SK-N-SH (cell line): ENCODE measurements at regions of chr1 and their contacts with region 1.

Region 1: DNA sequence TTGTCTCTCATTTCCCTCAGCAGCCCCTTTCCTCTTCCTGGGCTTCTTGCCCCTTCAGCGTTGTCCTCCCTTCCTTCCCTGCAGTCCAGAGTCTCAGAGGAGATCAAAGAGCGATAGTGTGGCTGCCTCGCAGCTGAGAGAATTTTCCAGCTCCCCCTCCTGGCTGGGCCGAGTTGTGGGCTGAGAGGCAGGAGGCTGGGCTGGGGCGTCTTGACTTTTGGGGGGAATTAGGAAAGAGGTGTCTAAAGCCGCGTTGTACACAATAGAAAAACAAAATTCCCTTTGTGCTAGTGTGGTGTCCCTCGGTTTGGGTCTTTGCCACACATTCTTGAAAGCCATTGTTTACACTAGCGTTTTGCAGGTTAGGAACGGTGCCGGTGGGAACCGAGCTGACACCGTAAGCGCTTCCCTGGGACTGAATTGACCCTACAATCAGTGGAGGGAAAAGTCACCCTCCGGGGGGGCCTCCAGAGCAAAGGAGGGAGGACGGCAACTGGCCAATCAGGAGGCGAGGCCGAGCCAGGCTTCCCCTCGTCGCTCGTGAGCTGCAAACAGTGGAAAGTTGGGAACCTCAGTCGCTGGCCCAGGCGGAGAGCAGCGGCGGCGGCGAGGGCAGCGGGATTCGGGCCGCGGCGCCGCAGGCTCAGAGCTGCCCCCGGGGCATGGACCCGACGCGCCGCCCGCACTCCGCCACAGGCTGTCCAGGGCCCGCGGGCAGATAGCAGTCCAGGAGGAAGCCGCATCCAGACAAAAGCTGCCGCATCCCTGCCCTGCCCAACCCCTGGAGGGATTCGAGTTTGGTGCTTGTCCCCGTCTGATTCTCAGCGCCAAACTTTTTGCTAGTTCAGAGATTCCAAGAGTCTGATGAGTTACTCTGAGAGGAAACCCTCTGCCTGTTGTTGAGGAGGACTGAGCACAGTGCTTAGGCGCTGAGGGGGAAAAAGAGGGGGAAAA is at the start of gene HMCN1:
- DNase-seq: peak; percentile 59
- H3K4me3 ChIP-seq: peak within 1 kb of the TSS; percentile 66 to 68
- H3K27ac ChIP-seq: peak within 1 kb of the TSS; percentile 67 to 78
- H3K4me1 ChIP-seq: peaks cover 7 to 14% of the 10 kb centered on the region in 2 experiments; a peak in 3 of 4 replicates
- H3K27me3 ChIP-seq: peaks cover 4% of the 10 kb centered on the region; the same call in 1 of the 2 replicates
- CTCF ChIP-seq: peak; percentile 57
- EP300 ChIP-seq: no peak
- RAD21 ChIP-seq: no peak
- polyA plus RNA-seq, gene HMCN1: 59.5 and 92.6 TPM in 2 replicates

Region 2: DNA sequence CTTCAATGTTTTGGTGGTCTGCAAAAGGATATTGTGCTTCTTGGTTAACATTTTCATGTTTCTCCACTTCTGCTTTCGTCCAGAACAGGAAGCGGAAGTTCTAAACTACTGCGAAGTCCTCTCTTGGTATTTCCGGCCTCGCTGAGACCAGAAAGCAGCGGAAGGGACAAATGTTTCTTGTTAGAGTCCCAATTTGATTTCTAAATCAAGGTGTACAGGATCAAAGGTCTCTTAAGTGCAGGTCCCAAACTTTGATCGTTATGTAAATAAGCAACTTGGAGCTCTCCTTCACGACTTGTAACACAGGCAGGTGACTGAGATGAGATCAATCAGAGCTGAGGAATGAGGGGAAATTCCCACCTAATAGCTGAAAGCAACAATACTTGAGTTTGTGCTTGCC is 40.0 kb before region 1 on chr1:
- CTCF ChIA-PET with region 1: no interaction called
- POLR2A ChIA-PET with region 1: no interaction called
- DNase-seq: no peak
- H3K4me3 ChIP-seq: no peak overlapping the region
- H3K27ac ChIP-seq: peak overlapping the region in 1 of 2 experiments; percentile 7; a peak in 1 of 4 replicates
- H3K4me1 ChIP-seq: peaks cover 0 to 26% of the 10 kb centered on the region in 2 experiments; a peak in 2 of 4 replicates
- H3K27me3 ChIP-seq: no peaks in the 10 kb centered on the region
- CTCF ChIP-seq: no peak
- EP300 ChIP-seq: no peak
- RAD21 ChIP-seq: no peak

Region 3: GRCh38 chr1:185720633-185721272 is 13.3 kb before region 1 on chr1:
- CTCF ChIA-PET with region 1: interaction called, 18 read pairs
- POLR2A ChIA-PET with region 1: no interaction called
- DNase-seq: no peak
- H3K4me3 ChIP-seq: no peak overlapping the region
- H3K27ac ChIP-seq: peak overlapping the region; percentile 65 to 78; a peak in 3 of 4 replicates
- H3K4me1 ChIP-seq: peaks cover 2 to 40% of the 10 kb centered on the region in 2 experiments; a peak in 3 of 4 replicates
- H3K27me3 ChIP-seq: no peaks in the 10 kb centered on the region
- CTCF ChIP-seq: peak; percentile 73
- EP300 ChIP-seq: no peak
- RAD21 ChIP-seq: peak; percentile 53; the same call in 1 of the 2 replicates

Region 4: DNA sequence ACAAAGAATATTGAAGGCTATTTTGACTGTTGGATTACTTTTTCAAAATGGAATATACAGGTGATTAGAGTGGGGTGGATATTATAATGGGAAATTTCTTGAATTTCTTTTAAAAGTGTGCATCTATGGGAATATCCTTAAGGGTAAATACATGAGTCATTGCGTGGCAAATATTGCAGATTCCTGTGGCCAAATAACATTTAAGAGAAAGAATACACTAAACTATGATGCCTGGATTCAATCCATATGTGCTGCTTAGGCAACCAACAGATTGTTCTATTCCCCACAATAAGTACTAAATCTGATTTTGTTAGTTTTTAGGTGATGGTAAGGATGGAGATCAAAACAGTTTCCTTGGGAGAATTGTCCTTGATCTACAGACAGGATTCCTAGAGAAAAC is 119.6 kb after region 1 on chr1:
- CTCF ChIA-PET with region 1: no interaction called
- POLR2A ChIA-PET with region 1: no interaction called
- DNase-seq: no peak
- H3K4me3 ChIP-seq: no peak overlapping the region
- H3K27ac ChIP-seq: peak overlapping the region; percentile 74 to 87; a peak in 3 of 4 replicates
- H3K4me1 ChIP-seq: peaks cover 11 to 13% of the 10 kb centered on the region in 2 experiments; a peak in 2 of 4 replicates
- H3K27me3 ChIP-seq: no peaks in the 10 kb centered on the region; the same call in 1 of the 2 replicates
- CTCF ChIP-seq: no peak
- EP300 ChIP-seq: no peak
- RAD21 ChIP-seq: no peak